GM10248 (cell line): ENCODE measurements at regions of chr13 and their contacts with region 1.

Region 1: GRCh38 chr13:46071590-46072249 is 19.2 kb upstream of the ZC3H13 start:
- DNase-seq: peak; percentile 57
- CTCF ChIP-seq: peak; percentile 32

Region 2: GRCh38 chr13:45833656-45834375 is 237.9 kb before region 1 on chr13:
- CTCF ChIA-PET with region 1: no interaction called
- POLR2A ChIA-PET with region 1: no interaction called
- DNase-seq: no peak
- CTCF ChIP-seq: no peak

Region 3: GRCh38 chr13:46057256-46058015 is 14.3 kb before region 1 on chr13:
- CTCF ChIA-PET with region 1: interaction called, 11 read pairs
- POLR2A ChIA-PET with region 1: no interaction called
- DNase-seq: no peak
- CTCF ChIP-seq: no peak

Region 4: GRCh38 chr13:46082324-46082723 is 10.6 kb after region 1 on chr13:
- CTCF ChIA-PET with region 1: interaction called, 17 read pairs
- POLR2A ChIA-PET with region 1: no interaction called
- DNase-seq: no peak
- CTCF ChIP-seq: no peak

Region 5: DNA sequence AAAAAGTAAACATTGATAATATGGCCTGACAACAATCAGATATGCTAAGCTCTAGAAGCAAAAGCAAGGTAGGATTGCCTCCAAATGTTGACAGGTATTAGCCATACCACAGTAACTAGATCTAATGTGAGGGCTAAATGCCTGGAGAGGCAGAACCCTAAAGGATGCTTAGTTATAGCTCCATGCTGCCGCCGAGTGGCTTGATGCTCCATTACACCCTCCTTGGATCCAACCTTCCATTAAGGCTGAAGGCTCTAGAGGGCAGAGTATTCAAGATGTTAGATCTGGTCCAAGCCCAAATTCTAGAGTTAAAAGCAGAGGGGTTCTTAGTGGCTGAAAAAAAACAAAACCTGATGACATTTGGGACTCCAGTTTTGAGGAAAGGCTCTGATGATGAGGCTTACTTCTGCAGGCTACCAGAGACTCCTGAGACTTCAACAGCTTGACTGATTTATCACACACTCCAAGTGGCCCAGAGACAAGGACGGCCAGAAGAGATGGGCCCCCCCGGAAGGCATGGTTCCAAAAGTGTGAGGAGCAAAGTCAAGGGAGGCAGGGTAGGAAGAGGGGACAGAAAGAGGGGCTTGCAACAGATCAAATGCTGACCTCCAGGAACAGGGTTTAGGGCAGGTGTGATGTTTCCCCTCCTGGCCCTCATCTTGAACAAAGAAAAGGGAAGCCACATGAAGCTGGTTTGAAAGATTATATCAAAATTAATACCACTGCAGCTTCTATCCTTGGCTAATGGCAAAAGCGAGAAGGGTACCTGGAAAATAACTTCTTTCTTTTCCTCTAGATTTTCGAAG is 55.0 kb after region 1 on chr13:
- CTCF ChIA-PET with region 1: interaction called, 24 read pairs
- POLR2A ChIA-PET with region 1: no interaction called
- DNase-seq: peak; percentile 58
- CTCF ChIP-seq: peak; percentile 88